K562 (cell line): ENCODE measurements at regions of chr13 and their contacts with region 1.

Region 1: DNA sequence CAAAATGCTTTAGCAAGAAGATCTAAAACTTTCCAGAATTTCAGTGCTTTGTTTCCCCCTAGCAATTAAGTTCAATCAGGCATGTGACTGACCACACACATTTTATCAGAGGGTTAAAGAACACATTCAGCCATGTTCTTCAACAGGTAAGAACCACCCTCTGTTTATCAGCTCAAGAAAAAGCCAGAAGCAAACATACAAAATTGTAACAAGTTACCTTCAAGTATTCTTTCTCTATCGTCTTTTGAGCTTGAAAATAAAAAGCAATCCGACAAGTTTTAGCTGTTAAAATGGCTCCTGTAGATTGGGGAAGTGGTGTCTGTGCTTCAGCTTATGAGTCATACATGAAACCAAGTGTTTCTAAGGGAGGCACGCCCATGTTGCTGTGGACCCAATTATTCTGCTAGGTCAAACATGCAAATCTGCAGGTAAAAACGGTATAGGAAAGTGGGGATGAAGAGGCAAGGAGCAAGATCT is at the start of gene ELF1:
- DNase-seq: peak; percentile 43 to 84 (median 54)
- ATAC-seq: peak; percentile 82
- H3K4me3 ChIP-seq: peak within 1 kb of the TSS; percentile 53
- H3K27ac ChIP-seq: peak within 1 kb of the TSS; percentile 86
- H3K4me1 ChIP-seq: peaks cover 2 to 16% of the 10 kb centered on the region in 2 experiments; a peak in 4 of 5 replicates
- H3K27me3 ChIP-seq: no peaks in the 10 kb centered on the region
- CTCF ChIP-seq: no peak
- EP300 ChIP-seq: peak; percentile 33; the same call in 1 of the 2 replicates
- POLR2A ChIP-seq: peak; percentile 78
- RAD21 ChIP-seq: no peak
- polyA plus RNA-seq, gene ELF1: 30.4 to 36.8 TPM

Region 2: GRCh38 chr13:40789275-40790133 is 229.5 kb before region 1 on chr13 and contains the start of gene SLC25A15:
- CTCF ChIA-PET with region 1: no interaction called
- POLR2A ChIA-PET with region 1: no interaction called
- in situ Hi-C with region 1: no loop called
- intact Hi-C with region 1: loop called (anchors 10 kb)
- DNase-seq: peak; percentile 72 to 86 (median 79)
- ATAC-seq: peak; percentile 90
- H3K4me3 ChIP-seq: peak within 1 kb of the TSS; percentile 60
- H3K27ac ChIP-seq: peak within 1 kb of the TSS; percentile 80
- H3K4me1 ChIP-seq: peaks cover 13 to 20% of the 10 kb centered on the region in 2 experiments
- H3K27me3 ChIP-seq: no peaks in the 10 kb centered on the region
- CTCF ChIP-seq: peak in 2 of 3 experiments; percentile 28 to 47; a peak in 3 of 6 replicates
- EP300 ChIP-seq: no peak
- POLR2A ChIP-seq: peak; percentile 71; the same call in 1 of the 2 replicates
- RAD21 ChIP-seq: peak in 1 of 2 experiments; percentile 37; a peak in 2 of 4 replicates
- polyA plus RNA-seq, gene SLC25A15: 3.5 to 6.6 TPM

Region 3: GRCh38 chr13:40982772-40983171 is 36.3 kb before region 1 on chr13:
- CTCF ChIA-PET with region 1: no interaction called
- POLR2A ChIA-PET with region 1: no interaction called
- in situ Hi-C with region 1: no loop called
- intact Hi-C with region 1: loop called (anchors 1 kb)
- DNase-seq: peak in 2 of 4 experiments; percentile 53 to 74
- ATAC-seq: peak; percentile 66
- H3K4me3 ChIP-seq: no peak overlapping the region
- H3K27ac ChIP-seq: peak overlapping the region; percentile 82; the same call in 2 of the 3 replicates
- H3K4me1 ChIP-seq: peaks cover 0 to 24% of the 10 kb centered on the region in 2 experiments; a peak in 1 of 5 replicates
- H3K27me3 ChIP-seq: no peaks in the 10 kb centered on the region
- CTCF ChIP-seq: no peak
- EP300 ChIP-seq: peak; percentile 68; the same call in 1 of the 2 replicates
- POLR2A ChIP-seq: no peak
- RAD21 ChIP-seq: no peak

Region 4: GRCh38 chr13:41004875-41005693 is 14.0 kb before region 1 on chr13:
- CTCF ChIA-PET with region 1: no interaction called
- POLR2A ChIA-PET with region 1: interaction called, 10 read pairs
- in situ Hi-C with region 1: no loop called
- intact Hi-C with region 1: loop called (anchors 1 kb)
- DNase-seq: peak in 2 of 4 experiments; percentile 26 to 63
- ATAC-seq: peak; percentile 68
- H3K4me3 ChIP-seq: no peak overlapping the region
- H3K27ac ChIP-seq: peak overlapping the region; percentile 71
- H3K4me1 ChIP-seq: peaks cover 4 to 45% of the 10 kb centered on the region in 2 experiments
- H3K27me3 ChIP-seq: no peaks in the 10 kb centered on the region
- CTCF ChIP-seq: no peak
- EP300 ChIP-seq: peak; percentile 89
- POLR2A ChIP-seq: no peak
- RAD21 ChIP-seq: no peak

Region 5: DNA sequence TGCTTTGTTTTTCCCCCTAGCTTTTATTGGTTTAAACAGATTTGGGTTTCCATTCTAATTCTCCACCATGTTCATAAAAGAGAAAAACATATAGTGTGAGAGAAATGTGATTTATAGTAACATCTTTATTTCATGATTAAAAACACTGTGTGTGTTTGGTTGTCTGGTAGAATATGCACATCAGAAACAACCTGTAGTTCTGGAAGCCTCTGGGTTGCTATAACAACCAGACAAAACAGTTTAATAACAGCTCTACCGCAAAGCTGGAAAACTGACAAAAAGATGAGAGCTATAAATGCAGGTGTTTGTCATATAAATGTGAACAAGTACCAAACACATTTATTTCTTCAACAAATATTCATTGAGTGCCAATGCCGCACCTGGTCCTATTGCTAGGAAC is 103.8 kb after region 1 on chr13:
- CTCF ChIA-PET with region 1: no interaction called
- POLR2A ChIA-PET with region 1: no interaction called
- in situ Hi-C with region 1: no loop called
- intact Hi-C with region 1: no loop called
- DNase-seq: no peak
- ATAC-seq: no peak
- H3K4me3 ChIP-seq: no peak overlapping the region
- H3K27ac ChIP-seq: no peak overlapping the region
- H3K4me1 ChIP-seq: 0 out of 5 replicates have a peak, but pooled peaks cover 0 to 2% of the 10 kb centered on the region in 2 experiments
- H3K27me3 ChIP-seq: no peaks in the 10 kb centered on the region
- CTCF ChIP-seq: no peak
- EP300 ChIP-seq: no peak
- POLR2A ChIP-seq: no peak
- RAD21 ChIP-seq: no peak

Region 6: DNA sequence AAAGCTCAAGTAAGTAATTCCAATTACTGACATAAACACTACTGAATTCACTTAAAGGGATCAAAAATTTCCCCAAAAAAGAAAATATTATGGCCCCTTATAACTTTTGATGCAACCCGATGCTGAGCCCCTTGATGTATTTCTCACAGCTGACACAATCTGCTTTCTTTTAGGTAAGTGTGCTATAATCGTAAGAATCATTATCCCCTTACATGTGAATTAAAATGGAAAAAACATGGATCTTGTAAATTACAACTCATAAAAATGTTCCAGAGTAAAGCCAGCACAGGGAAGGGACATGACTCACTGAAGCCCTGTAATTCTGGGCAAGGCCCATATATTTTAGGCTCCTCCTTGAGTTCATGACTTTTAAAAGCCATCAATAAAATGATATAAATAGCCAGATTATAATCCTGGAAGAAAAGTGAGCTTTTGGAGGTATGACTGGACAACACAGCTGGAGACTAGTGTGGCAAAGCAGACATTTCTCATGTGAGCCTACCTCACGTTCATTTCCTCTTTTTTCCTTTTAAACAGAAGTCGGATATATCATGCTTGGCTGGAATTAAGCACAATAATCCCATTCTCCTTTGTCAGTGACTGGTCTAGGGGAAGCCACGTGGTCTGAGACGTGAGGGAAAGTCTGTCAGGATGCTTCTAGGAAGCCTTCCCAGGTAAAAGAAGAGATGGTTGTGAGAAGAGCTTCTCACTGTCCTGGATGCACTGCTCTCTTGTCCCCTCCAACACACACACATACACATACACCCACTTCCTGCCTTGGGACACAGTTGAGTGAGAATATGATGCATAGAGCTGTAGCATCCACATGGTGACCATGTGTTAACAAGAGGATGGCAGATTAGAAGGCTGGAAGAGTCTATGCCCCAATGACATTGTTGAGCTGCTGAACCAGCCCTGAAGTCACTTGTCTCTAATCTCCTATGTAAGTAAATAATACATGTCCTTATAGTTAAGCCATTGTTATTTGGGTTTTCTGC is 603.7 kb after region 1 on chr13:
- CTCF ChIA-PET with region 1: no interaction called
- POLR2A ChIA-PET with region 1: no interaction called
- in situ Hi-C with region 1: no loop called
- intact Hi-C with region 1: no loop called
- DNase-seq: no peak
- ATAC-seq: no peak
- H3K4me3 ChIP-seq: no peak overlapping the region
- H3K27ac ChIP-seq: no peak overlapping the region
- H3K4me1 ChIP-seq: no peaks in the 10 kb centered on the region
- H3K27me3 ChIP-seq: no peaks in the 10 kb centered on the region
- CTCF ChIP-seq: no peak
- EP300 ChIP-seq: no peak
- POLR2A ChIP-seq: no peak
- RAD21 ChIP-seq: no peak